IMR-90 (cell line): ENCODE measurements at regions of chr4 and their contacts with region 1.

Region 1: DNA sequence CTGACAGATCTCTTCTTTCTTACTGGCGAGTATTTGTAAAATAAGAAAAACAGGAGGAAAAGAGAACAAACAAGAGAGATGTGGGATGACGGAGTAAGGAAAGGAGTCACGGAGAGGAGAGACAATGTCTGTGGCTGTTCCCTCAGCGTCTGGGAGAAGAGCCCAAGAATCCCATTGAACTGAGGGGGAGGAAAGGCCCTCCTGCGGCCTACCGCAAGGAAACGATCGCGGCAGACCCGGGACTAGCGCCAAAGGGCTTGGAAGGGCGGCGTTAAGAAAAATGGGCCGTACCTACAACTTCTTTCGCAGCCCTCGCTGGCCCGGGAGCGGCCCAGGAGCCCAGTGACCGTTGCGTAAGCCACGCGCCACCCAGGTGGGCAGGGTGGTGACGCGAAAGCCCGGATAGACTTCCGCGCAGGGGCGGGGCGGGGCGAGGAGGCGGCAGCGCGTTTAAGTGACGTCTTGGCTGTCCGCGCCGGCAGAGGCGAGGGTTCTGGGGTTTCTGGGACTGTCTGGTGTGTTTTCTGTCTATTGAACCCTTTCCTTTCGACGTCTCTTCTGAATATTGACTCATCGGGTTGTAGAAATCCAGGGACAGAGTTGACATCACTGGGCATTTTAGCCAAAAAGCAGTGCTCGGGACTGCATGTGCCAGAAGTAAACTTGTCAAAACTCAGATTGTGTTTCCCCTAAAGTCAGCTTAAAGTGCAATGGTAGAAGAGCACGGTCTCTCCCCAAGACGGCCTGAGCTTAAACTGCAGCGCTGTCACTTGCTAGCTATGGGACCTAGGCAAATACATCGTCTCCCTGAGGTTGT is at the start of gene SLC9B1:
- DNase-seq: peak; percentile 97
- ATAC-seq: peak; percentile 99
- H3K4me3 ChIP-seq: peak within 1 kb of the TSS; percentile 69
- H3K27ac ChIP-seq: peak within 1 kb of the TSS; percentile 84
- H3K4me1 ChIP-seq: peaks cover 4% of the 10 kb centered on the region; the same call in 1 of the 2 replicates
- H3K27me3 ChIP-seq: no peaks in the 10 kb centered on the region
- CTCF ChIP-seq: no peak
- POLR2A ChIP-seq: peak; percentile 73; the same call in 1 of the 2 replicates
- RAD21 ChIP-seq: no peak
- total RNA-seq, gene SLC9B1: 0.18 and 0.28 TPM in 2 replicates

Region 2: DNA sequence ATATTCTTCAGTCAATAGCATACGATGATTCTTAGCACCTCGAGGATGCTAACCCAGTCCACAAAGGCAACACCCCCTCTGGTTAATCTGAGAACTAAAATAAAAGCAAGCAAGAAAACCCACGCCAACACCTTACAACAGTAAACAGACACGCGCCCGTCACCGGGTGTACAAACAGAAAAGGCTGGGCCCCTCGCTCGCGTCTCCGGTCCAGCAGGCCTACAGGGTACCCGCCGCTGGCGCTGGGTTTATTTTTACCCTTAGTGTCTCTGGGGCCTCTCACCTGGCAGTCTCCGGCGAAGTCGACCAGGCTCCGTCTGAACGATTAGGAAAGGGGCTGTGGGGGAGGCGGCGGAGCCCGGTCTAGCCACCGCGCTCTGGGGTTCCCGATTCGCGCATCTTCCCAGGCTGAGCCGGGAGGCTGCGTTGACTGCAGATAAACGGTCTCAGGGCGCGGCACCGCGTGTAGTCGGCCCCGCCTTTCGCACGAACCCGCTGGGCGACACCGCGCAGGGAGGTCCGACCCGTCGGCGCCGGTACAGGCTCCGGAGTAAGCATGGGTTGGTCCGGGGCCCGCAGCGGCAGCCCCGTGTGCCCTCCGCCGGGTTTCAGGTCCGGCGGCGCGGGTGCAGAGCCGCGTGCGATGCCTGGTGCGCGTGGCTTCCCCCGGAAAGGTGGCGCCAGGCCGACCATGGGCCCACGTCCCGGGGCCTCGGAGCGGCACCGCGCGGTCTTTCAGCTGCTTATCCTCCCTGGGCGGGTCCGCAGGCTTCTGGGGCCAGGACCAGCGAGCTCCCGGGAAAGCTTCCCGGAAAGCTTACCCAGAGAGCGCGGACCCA is 56.6 kb after region 1 on chr4:
- CTCF ChIA-PET with region 1: no interaction called
- POLR2A ChIA-PET with region 1: no interaction called
- dilution Hi-C with region 1: no loop called
- in situ Hi-C with region 1: no loop called
- intact Hi-C with region 1: loop called (anchors 5 kb)
- DNase-seq: peak; percentile 56
- ATAC-seq: peak; percentile 80
- H3K4me3 ChIP-seq: peak overlapping the region; percentile 76
- H3K27ac ChIP-seq: peak overlapping the region; percentile 71
- H3K4me1 ChIP-seq: peaks cover 2% of the 10 kb centered on the region; the same call in 1 of the 2 replicates
- H3K27me3 ChIP-seq: no peaks in the 10 kb centered on the region
- CTCF ChIP-seq: no peak
- POLR2A ChIP-seq: no peak; the same call in 1 of the 2 replicates
- RAD21 ChIP-seq: no peak

Region 3: GRCh38 chr4:103099691-103100392 is 80.3 kb after region 1 on chr4 and contains the start of gene BDH2:
- CTCF ChIA-PET with region 1: no interaction called
- POLR2A ChIA-PET with region 1: no interaction called
- dilution Hi-C with region 1: no loop called
- in situ Hi-C with region 1: no loop called
- intact Hi-C with region 1: loop called (anchors 2 kb)
- DNase-seq: peak; percentile 97
- ATAC-seq: peak; percentile 90
- H3K4me3 ChIP-seq: peak within 1 kb of the TSS; percentile 50
- H3K27ac ChIP-seq: peak within 1 kb of the TSS; percentile 96
- H3K4me1 ChIP-seq: peaks cover 7% of the 10 kb centered on the region
- H3K27me3 ChIP-seq: no peaks in the 10 kb centered on the region
- CTCF ChIP-seq: peak; percentile 85
- POLR2A ChIP-seq: no peak
- RAD21 ChIP-seq: peak; percentile 79
- total RNA-seq, gene BDH2: 36.4 and 52.2 TPM in 2 replicates

Region 4: GRCh38 chr4:103123114-103123513 is 103.6 kb after region 1 on chr4:
- CTCF ChIA-PET with region 1: no interaction called
- POLR2A ChIA-PET with region 1: no interaction called
- dilution Hi-C with region 1: no loop called
- in situ Hi-C with region 1: no loop called
- intact Hi-C with region 1: no loop called
- DNase-seq: peak; percentile 51
- ATAC-seq: no peak; the same call in 1 of the 2 replicates
- H3K4me3 ChIP-seq: no peak overlapping the region
- H3K27ac ChIP-seq: no peak overlapping the region
- H3K4me1 ChIP-seq: no peaks in the 10 kb centered on the region
- H3K27me3 ChIP-seq: no peaks in the 10 kb centered on the region
- CTCF ChIP-seq: no peak
- POLR2A ChIP-seq: no peak
- RAD21 ChIP-seq: no peak